ENCODE measurements at regions of chr16 and their contacts with region 1.

Region 1: DNA sequence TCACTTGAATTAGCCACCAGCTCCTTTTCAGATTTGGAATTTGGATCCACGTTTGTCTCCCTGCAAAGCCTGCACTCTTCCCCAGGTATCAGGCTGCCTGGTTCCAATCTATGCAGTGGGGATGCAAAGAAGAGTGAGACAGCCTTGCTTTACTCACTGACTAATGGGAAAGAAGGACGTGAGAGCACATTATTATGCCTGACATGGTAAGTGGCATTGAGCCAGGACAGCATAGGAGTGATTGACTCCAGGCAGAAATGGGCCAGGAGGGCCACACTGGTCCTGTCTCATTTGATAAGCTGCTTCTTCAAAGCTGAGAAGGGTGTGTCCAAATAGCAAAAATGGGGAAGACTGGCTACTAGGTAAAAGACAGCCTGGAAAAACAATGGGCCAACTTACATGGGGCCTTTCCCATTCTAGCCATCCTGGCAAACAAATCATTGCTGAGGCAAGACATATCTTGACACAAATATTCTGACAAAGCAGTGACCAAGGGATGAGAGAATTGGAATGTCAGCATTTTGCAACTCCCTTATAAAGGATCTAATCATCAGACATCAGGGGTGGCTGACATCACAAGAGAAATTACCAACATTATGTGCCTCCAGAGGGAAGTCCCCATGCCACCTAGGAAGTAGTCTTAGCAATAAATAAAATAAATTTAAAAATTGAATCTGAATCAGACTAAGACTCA is 38.6 kb downstream of the CDH11 start:
- DNase-seq: no peak
- H3K4me3 ChIP-seq: no peak overlapping the region
- H3K4me3 Mint-ChIP-seq: no peak overlapping the region
- H3K27ac ChIP-seq: no peak overlapping the region
- H3K27ac Mint-ChIP-seq: no peak overlapping the region
- H3K4me1 ChIP-seq: no peaks in the 10 kb centered on the region
- H3K4me1 Mint-ChIP-seq: no peaks in the 10 kb centered on the region
- H3K27me3 ChIP-seq: no peaks in the 10 kb centered on the region
- H3K27me3 Mint-ChIP-seq: peaks cover 0 to 3% (median 2%) of the 10 kb centered on the region in 3 donors
- CTCF ChIP-seq: no peak

Region 2: DNA sequence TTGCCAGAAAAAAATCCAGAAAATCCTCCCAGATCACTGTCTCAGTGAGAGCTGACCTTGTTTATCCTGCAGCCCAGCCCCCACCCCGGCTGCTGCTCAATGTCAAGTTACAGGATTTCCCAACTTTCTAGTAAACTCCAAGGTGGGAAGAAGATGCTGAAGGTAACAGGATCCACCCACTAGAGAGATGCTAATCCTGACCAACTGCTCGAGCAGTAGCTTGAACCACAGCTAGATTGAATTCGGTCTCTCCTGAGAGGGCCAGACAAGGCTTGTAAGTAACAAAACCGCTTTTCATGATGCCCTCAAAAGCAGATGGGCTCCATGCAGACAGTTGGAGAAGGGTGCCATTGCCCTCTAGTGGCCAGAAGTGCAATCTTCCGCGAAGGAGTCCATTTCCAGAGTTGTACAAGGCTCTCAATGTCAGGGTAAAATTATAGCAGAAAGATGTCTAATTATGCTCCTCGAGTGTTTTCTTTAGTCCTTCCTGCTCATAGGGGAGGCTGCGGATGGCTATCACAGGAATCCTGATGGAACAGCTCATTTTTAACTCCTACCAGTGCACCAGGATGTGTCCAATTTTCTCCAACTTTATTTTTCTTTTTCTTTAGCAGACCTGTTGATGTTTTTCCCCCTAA is 34.6 kb after region 1 on chr16:
- intact Hi-C with region 1: no loop called
- DNase-seq: peak in 2 of 3 donors; percentile 3 to 6
- H3K4me3 ChIP-seq: no peak overlapping the region
- H3K4me3 Mint-ChIP-seq: no peak overlapping the region
- H3K27ac ChIP-seq: no peak overlapping the region
- H3K27ac Mint-ChIP-seq: no peak overlapping the region
- H3K4me1 ChIP-seq: no peaks in the 10 kb centered on the region
- H3K4me1 Mint-ChIP-seq: no peaks in the 10 kb centered on the region
- H3K27me3 ChIP-seq: peaks cover 30 to 47% of the 10 kb centered on the region in 2 donors
- H3K27me3 Mint-ChIP-seq: peaks cover 34 to 48% (median 44%) of the 10 kb centered on the region in 3 donors
- CTCF ChIP-seq: peak; percentile 87

Region 3: GRCh38 chr16:65142276-65142675 is 59.0 kb after region 1 on chr16:
- intact Hi-C with region 1: loop called in 1 of 2 experiments (anchors 10 kb)
- DNase-seq: no peak
- H3K4me3 ChIP-seq: no peak overlapping the region
- H3K4me3 Mint-ChIP-seq: no peak overlapping the region
- H3K27ac ChIP-seq: no peak overlapping the region
- H3K27ac Mint-ChIP-seq: no peak overlapping the region
- H3K4me1 ChIP-seq: no peaks in the 10 kb centered on the region
- H3K4me1 Mint-ChIP-seq: no peaks in the 10 kb centered on the region
- H3K27me3 ChIP-seq: no peaks in the 10 kb centered on the region
- H3K27me3 Mint-ChIP-seq: peaks cover 2 to 3% (median 2%) of the 10 kb centered on the region in 3 donors
- CTCF ChIP-seq: no peak